ENCODE measurements at regions of chr2 and their contacts with region 1.

Region 1: DNA sequence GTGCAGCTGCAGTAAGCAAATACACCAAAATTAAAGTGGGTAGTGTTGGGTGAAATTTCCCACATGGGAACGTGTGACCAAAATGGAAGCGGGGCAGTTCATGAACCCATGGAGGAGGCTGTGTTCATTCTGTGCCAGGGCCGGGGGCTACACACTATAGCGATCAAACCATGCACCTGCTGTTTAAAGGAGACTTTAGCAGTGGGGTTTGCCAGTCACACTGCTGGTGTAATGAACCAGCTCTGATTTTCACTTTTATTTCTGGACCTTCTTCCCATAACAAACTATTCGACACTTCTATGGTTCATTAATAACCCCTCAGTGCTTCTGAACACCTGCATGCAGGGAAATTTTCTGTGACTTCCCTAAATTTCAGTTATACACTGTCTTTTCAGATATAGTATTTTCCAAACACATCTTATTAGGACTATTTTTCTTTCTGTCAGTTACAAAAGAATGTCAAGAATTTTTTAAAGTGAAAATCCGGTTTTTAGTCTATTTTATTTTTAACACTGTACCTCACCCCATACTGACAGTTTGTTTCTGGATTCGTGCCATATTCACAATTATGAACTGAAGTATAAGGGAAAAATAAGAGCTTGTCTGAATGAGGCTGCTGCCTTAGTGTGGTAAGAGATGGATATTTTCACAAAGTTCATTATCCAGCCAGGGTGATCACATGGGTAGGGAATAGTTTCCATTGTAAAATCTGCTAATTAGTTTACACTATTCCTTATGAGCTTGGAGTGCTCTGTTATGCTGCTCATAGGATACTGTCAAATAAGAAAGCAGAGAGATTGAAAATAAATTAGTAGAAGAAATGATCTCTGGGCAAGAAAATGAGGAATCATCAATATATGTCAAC is 111.3 kb upstream of the CAVIN2 start:
- DNase-seq: no peak
- H3K4me3 ChIP-seq: no peak overlapping the region
- H3K27ac ChIP-seq: no peak overlapping the region
- H3K4me1 ChIP-seq: no peaks in the 10 kb centered on the region
- H3K27me3 ChIP-seq: no peaks in the 10 kb centered on the region
- CTCF ChIP-seq: no peak

Region 2: GRCh38 chr2:191942090-191942738 is 16.0 kb before region 1 on chr2:
- CTCF ChIA-PET with region 1: no interaction called
- POLR2A ChIA-PET with region 1: no interaction called
- intact Hi-C with region 1: no loop called
- DNase-seq: no peak
- H3K4me3 ChIP-seq: no peak overlapping the region
- H3K27ac ChIP-seq: no peak overlapping the region
- H3K4me1 ChIP-seq: peaks cover 28% of the 10 kb centered on the region
- H3K27me3 ChIP-seq: no peaks in the 10 kb centered on the region
- CTCF ChIP-seq: no peak

Region 3: DNA sequence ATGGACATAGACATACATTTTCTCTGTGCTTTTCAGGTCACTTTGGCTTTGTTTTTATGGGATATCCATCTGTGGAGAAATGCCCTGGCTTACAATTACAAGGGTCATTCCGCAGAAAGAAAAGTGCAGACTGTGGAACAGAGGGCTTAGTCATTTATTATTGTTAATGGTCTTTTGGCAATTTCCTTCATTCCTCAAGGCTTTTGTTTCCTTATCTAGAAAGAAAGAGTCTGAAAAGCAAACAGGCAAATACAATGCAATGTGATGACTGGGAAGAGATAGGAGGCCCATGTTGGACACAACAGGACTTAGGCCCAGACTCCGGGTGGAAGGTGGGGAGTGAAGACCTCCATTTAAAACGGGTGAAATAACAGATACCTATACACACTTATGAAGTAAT is 18.2 kb after region 1 on chr2:
- CTCF ChIA-PET with region 1: no interaction called
- POLR2A ChIA-PET with region 1: interaction called, 10 read pairs
- intact Hi-C with region 1: no loop called
- DNase-seq: no peak
- H3K4me3 ChIP-seq: no peak overlapping the region
- H3K27ac ChIP-seq: no peak overlapping the region
- H3K4me1 ChIP-seq: no peaks in the 10 kb centered on the region
- H3K27me3 ChIP-seq: no peaks in the 10 kb centered on the region
- CTCF ChIP-seq: no peak

Region 4: GRCh38 chr2:192035731-192036442 is 77.7 kb after region 1 on chr2:
- CTCF ChIA-PET with region 1: no interaction called
- POLR2A ChIA-PET with region 1: no interaction called
- intact Hi-C with region 1: no loop called
- DNase-seq: peak; percentile 57
- H3K4me3 ChIP-seq: no peak overlapping the region
- H3K27ac ChIP-seq: no peak overlapping the region
- H3K4me1 ChIP-seq: peaks cover 9% of the 10 kb centered on the region
- H3K27me3 ChIP-seq: no peaks in the 10 kb centered on the region
- CTCF ChIP-seq: no peak

Region 5: GRCh38 chr2:192277494-192278109 is 319.4 kb after region 1 on chr2:
- CTCF ChIA-PET with region 1: no interaction called
- POLR2A ChIA-PET with region 1: no interaction called
- intact Hi-C with region 1: no loop called
- DNase-seq: no peak
- H3K4me3 ChIP-seq: no peak overlapping the region
- H3K27ac ChIP-seq: no peak overlapping the region
- H3K4me1 ChIP-seq: no peaks in the 10 kb centered on the region
- H3K27me3 ChIP-seq: no peaks in the 10 kb centered on the region
- CTCF ChIP-seq: no peak

Region 6: GRCh38 chr2:192407692-192408091 is 449.5 kb after region 1 on chr2:
- CTCF ChIA-PET with region 1: no interaction called
- POLR2A ChIA-PET with region 1: no interaction called
- intact Hi-C with region 1: no loop called
- DNase-seq: no peak
- H3K4me3 ChIP-seq: no peak overlapping the region
- H3K27ac ChIP-seq: no peak overlapping the region
- H3K4me1 ChIP-seq: no peaks in the 10 kb centered on the region
- H3K27me3 ChIP-seq: no peaks in the 10 kb centered on the region
- CTCF ChIP-seq: no peak

Measured in A673 (cell line).